CD14-positive monocyte (primary cell): ENCODE measurements at regions of chr22 and their contacts with region 1.

Region 1: GRCh38 chr22:42437488-42438292 is 5.5 kb upstream of the NFAM1 start:
- DNase-seq: peak; percentile 73 to 83 (median 82)
- H3K4me3 ChIP-seq: peak overlapping the region; percentile 22 to 79 (median 57)
- H3K4me3 Mint-ChIP-seq: peak overlapping the region; percentile 74 to 88
- H3K27ac ChIP-seq: peak overlapping the region; percentile 22 to 82
- H3K27ac Mint-ChIP-seq: peak overlapping the region; percentile 68 to 97 (median 90)
- H3K4me1 ChIP-seq: peaks cover 88 to 93% of the 10 kb centered on the region in 2 donors
- H3K4me1 Mint-ChIP-seq: peaks cover 82% of the 10 kb centered on the region
- H3K27me3 ChIP-seq: no peaks in the 10 kb centered on the region
- H3K27me3 Mint-ChIP-seq: peaks cover 0 to 13% (median 3%) of the 10 kb centered on the region in 3 donors
- CTCF ChIP-seq: peak; percentile 100

Region 2: DNA sequence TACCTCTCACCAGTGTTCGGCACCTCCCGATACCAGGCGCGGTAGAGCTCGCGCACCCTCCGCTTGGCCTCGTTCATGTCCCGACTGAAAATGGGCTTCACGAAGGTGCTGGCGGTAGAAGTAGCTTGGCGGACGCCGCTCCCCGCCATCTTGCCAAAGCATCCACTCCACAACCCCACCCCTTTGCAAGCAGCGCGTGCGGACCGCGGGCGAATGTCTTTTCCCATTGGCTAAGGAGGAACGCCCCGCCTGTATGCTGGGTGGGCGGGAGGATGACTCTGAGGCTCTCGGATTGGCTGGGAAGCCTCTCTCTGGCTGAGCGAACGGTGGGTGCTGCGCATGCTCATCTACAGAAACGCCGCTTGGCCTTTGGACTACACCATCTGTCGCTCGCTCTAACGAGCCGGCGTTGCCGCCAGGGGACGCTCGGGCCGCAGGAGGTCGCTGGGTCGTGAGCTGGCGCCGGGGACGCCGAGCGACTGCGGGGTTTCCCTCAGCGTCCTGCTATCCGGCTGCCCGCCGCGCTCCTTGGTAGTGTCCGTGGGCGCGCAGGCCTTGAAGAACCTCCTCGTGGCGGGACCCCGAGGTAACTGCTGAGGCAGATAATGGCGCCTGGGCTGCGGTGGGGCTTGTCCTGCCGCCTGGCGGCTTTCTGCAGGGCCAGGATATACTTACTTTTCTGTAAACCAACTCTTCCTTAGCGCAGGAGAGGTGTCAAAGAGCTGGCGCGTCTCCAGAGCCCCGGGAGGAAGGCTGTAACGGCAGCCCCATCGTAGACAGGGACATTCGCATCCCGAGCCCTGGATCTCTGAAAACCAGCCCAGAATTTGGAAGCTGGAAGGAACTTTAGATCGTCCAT is 346.9 kb before region 1 on chr22 and contains the start of gene NDUFA6:
- intact Hi-C with region 1: loop called (anchors 5 kb)
- DNase-seq: peak; percentile 99 to 100 (median 99)
- H3K4me3 ChIP-seq: peak within 1 kb of the TSS; percentile 68 to 90 (median 74)
- H3K4me3 Mint-ChIP-seq: peak within 1 kb of the TSS; percentile 94 to 97
- H3K27ac ChIP-seq: peak within 1 kb of the TSS; percentile 94 to 98
- H3K27ac Mint-ChIP-seq: peak within 1 kb of the TSS; percentile 97 to 99 (median 99)
- H3K4me1 ChIP-seq: peaks cover 15 to 24% of the 10 kb centered on the region in 2 donors
- H3K4me1 Mint-ChIP-seq: peaks cover 21% of the 10 kb centered on the region
- H3K27me3 ChIP-seq: no peaks in the 10 kb centered on the region
- H3K27me3 Mint-ChIP-seq: peaks cover 0 to 1% (median 0%) of the 10 kb centered on the region in 3 donors
- CTCF ChIP-seq: peak; percentile 87
- polyA plus RNA-seq, gene NDUFA6: 42.9 to 167 (median 138) TPM

Region 3: DNA sequence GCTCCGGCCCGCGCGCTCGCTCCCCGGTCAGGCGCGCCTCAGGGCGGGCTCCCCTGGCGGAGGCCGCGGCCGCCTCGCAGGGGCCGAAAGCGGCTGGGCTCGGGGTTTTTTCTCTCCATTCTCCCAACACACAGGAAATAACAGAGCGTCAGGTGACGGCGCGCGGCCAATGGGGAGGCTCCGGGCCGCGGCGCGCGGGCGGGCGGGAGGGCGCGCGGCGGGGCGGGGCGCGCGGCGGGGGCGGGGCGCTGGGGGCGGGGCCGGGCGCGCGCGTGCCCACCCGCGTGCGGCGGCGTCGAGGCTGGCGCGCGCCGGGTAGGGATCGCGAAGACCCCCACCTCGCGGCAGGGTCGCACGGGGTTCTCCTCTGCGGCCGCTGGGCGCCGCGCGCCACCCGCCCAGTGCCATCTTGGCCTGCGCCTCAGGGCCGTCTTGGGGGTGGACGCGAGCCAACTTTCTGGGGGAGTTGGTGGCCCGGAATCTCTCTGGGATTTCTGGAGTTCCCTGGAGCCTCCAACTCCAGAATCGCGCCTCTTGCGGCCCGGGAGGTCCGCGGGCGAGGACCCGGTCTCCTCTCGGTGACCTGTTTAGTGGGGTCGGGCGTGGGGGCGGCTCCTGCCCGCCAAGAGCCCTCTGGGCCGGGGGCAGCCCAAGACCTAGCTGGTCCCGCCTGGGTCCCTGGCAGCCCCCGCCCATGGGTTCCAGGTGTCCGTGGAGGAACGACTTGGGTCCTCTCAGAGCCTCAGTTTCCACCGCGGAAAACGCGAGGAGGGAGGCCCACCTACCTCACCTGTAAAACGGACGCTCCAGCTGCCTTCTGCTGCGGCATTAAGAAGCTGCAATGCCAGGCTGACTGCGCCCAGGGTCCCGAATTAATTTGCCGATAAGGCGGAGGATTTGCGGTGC is 166.9 kb before region 1 on chr22 and contains the start of gene TCF20:
- intact Hi-C with region 1: loop called (anchors 10 kb)
- DNase-seq: peak; percentile 68 to 80 (median 74)
- H3K4me3 ChIP-seq: peak within 1 kb of the TSS; percentile 79 to 95 (median 94)
- H3K4me3 Mint-ChIP-seq: peak within 1 kb of the TSS; percentile 77 to 94
- H3K27ac ChIP-seq: peak within 1 kb of the TSS in 1 of 2 donors; percentile 84
- H3K27ac Mint-ChIP-seq: peak within 1 kb of the TSS in 5 of 7 donors; percentile 32 to 75 (median 61)
- H3K4me1 ChIP-seq: peaks cover 20 to 34% of the 10 kb centered on the region in 2 donors
- H3K4me1 Mint-ChIP-seq: peaks cover 23% of the 10 kb centered on the region
- H3K27me3 ChIP-seq: no peaks in the 10 kb centered on the region
- H3K27me3 Mint-ChIP-seq: peaks cover 2 to 11% (median 8%) of the 10 kb centered on the region in 3 donors
- CTCF ChIP-seq: no peak
- polyA plus RNA-seq, gene TCF20: 0.67 to 11.1 (median 0.99) TPM

Region 4: DNA sequence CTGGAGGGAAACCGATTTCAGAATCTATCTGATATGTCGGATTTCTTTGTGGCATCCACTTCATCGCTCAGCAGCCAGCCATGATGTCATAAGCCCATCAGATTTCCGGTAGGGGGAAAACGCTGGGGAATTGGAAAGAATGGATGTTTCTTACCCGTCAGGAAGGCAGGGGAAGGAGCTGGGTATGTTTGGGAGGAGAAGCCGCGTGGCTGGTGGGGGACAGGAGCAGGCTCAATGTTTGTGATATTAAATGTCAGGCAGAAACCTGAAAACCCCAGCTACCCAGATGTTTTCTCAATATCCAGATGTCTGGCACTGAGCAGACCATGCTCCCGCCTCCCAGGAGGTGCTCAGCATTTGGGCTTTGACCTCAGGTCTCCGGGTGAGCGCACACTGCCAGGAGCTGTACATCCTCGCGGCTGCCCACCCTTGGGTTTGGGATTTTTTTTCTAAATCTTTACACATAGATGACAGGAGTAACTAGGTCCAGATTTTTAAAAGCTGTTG is 73.0 kb before region 1 on chr22:
- intact Hi-C with region 1: no loop called
- DNase-seq: no peak
- H3K4me3 ChIP-seq: no peak overlapping the region
- H3K4me3 Mint-ChIP-seq: peak overlapping the region in 1 of 2 donors; percentile 67
- H3K27ac ChIP-seq: no peak overlapping the region
- H3K27ac Mint-ChIP-seq: no peak overlapping the region
- H3K4me1 ChIP-seq: peaks cover 15 to 19% of the 10 kb centered on the region in 2 donors
- H3K4me1 Mint-ChIP-seq: peaks cover 20% of the 10 kb centered on the region
- H3K27me3 ChIP-seq: peaks cover 40 to 68% of the 10 kb centered on the region in 2 donors
- H3K27me3 Mint-ChIP-seq: peaks cover 60 to 87% (median 64%) of the 10 kb centered on the region in 3 donors
- CTCF ChIP-seq: no peak

Region 5: DNA sequence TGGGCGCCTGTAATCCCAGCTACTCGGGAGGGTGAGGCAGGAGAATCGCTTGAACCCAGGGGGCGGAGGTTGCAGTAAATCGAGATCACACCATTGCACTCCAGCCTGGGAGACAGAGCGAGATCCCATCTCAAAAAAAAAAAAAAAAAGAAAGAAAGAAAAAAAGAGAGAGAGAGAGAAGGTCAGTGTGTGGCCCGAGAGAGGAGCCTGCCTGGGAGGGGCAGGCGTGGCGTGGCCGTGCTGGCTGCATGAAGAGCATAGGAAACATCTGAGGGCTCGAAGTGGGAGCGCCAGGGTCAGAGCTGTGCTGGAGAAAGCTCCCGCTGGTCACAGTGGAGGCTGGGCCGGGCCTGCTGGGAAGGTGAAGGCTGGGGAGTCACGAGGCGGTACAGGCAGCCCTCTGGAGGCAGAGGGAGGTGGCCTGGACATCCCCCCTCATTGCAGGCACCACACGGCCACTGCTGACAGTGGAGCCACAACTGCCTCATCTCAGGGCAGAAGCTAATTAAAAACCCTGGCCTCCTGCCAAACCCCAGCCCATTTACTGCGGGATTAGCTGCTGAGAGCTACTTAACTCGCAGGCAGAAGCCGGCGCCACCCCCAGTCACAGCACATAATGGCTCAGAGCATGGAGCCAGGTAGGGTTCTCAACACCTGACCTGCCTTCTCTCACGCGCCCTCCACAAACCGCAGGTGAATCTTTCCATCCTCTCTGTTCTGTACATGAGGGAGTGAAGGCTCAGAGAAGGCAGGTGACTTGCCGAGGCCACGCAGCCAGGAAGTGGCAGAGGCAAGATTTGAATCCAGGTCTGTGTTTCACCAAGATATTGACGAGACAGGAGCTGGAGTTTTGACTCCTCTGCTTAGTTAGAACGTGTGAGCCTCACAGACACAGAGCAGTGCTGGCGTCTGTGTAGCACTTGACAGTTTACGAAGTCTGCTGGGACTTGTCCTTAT is 38.1 kb before region 1 on chr22:
- intact Hi-C with region 1: loop called (anchors 2 to 5 kb)
- DNase-seq: no peak
- H3K4me3 ChIP-seq: no peak overlapping the region
- H3K4me3 Mint-ChIP-seq: no peak overlapping the region
- H3K27ac ChIP-seq: peak overlapping the region; percentile 79 to 89
- H3K27ac Mint-ChIP-seq: peak overlapping the region; percentile 79 to 94 (median 90)
- H3K4me1 ChIP-seq: peaks cover 37 to 48% of the 10 kb centered on the region in 2 donors
- H3K4me1 Mint-ChIP-seq: peaks cover 47% of the 10 kb centered on the region
- H3K27me3 ChIP-seq: no peaks in the 10 kb centered on the region
- H3K27me3 Mint-ChIP-seq: peaks cover 0 to 4% (median 2%) of the 10 kb centered on the region in 3 donors
- CTCF ChIP-seq: no peak